Esophagus muscularis mucosa (tissue), 4 donors: ENCODE measurements at regions of chr3 and their contacts with region 1.

Region 1: GRCh38 chr3:47282424-47283192 is at the starts of genes KIF9 and KLHL18:
- DNase-seq: peak; percentile 98
- H3K4me3 ChIP-seq: peak within 1 kb of the TSS; percentile 68 to 91 (median 82)
- H3K27ac ChIP-seq: peak within 1 kb of the TSS; percentile 89 to 95 (median 94)
- H3K4me1 ChIP-seq: peaks cover 42 to 63% (median 54%) of the 10 kb centered on the region in 4 donors
- H3K27me3 ChIP-seq: no peaks in the 10 kb centered on the region
- CTCF ChIP-seq: peak in 2 of 3 experiments; percentile 16 to 19
- EP300 ChIP-seq: peak; percentile 19
- POLR2A ChIP-seq: no peak
- total RNA-seq, gene KIF9: 5.4 to 7.3 (median 6.4) TPM
- total RNA-seq, gene KLHL18: 10.4 to 18.1 (median 16.5) TPM

Region 2: GRCh38 chr3:47164007-47164881 is 118.4 kb before region 1 on chr3 and contains the start of gene SETD2:
- intact Hi-C with region 1: loop called (anchors 5 kb)
- DNase-seq: peak; percentile 98
- H3K4me3 ChIP-seq: peak within 1 kb of the TSS; percentile 79 to 99 (median 86)
- H3K27ac ChIP-seq: peak within 1 kb of the TSS; percentile 94 to 98 (median 97)
- H3K4me1 ChIP-seq: peaks cover 46 to 54% (median 48%) of the 10 kb centered on the region in 4 donors
- H3K27me3 ChIP-seq: no peaks in the 10 kb centered on the region
- CTCF ChIP-seq: peak; percentile 24 to 39 (median 27)
- EP300 ChIP-seq: no peak
- POLR2A ChIP-seq: peak; percentile 13
- total RNA-seq, gene SETD2: 52.2 to 66.4 (median 56.8) TPM